ENCODE measurements at regions of chr19 and their contacts with region 1.

Region 1: DNA sequence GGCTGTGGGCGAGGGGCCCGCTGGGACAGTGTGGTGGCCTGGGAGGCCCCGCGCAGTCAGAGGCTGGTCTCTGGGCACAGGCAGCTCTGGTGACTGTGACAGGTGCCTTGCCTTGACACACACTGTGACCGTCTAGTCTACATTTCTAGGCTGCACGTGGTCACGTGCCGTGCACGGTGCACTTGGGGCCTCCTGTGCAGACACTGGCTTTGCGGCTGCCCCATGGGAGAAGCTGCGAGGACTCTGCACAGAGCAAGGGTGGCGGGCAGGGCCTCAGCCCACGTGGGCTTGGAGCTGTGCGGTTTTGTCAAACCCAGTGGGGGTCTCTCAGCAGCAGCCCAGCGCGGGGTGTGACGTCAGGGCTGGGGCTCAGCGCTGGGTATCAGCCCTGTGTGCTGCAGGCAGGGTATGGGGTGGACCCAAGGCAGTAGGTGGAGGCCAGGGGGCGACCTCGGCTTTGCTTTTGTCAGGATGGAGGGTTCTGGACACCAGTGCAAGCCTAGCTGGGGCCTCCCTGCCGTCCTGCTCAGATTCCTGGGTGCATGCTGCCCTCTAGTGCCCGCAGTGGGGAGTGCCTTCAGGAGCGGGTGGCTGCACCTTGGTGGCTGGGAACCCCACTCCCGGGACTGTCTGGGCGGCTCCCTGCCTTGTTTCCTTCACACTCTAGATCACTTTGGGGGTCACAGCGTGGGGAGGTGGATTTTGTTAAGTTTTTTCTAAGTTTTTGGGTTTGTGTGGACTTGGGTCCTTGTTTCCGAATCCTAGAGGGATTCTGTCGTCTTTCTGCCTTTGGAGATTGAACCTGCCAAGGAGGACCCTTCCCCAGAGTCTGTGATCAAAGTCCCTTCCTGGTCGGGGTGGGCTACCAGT is 62.6 kb downstream of the KDM4B start:
- DNase-seq: no peak
- H3K4me3 ChIP-seq: no peak overlapping the region
- H3K27ac ChIP-seq: no peak overlapping the region
- H3K27me3 ChIP-seq: no peaks in the 10 kb centered on the region
- CTCF ChIP-seq: peak; percentile 95

Region 2: GRCh38 chr19:5018224-5019015 is 13.0 kb before region 1 on chr19:
- CTCF ChIA-PET with region 1: interaction called, 15 read pairs
- POLR2A ChIA-PET with region 1: no interaction called
- DNase-seq: no peak
- H3K4me3 ChIP-seq: no peak overlapping the region
- H3K27ac ChIP-seq: peak overlapping the region; percentile 39
- H3K27me3 ChIP-seq: no peaks in the 10 kb centered on the region
- CTCF ChIP-seq: no peak